ENCODE measurements at regions of chr15 and their contacts with region 1.

Region 1: DNA sequence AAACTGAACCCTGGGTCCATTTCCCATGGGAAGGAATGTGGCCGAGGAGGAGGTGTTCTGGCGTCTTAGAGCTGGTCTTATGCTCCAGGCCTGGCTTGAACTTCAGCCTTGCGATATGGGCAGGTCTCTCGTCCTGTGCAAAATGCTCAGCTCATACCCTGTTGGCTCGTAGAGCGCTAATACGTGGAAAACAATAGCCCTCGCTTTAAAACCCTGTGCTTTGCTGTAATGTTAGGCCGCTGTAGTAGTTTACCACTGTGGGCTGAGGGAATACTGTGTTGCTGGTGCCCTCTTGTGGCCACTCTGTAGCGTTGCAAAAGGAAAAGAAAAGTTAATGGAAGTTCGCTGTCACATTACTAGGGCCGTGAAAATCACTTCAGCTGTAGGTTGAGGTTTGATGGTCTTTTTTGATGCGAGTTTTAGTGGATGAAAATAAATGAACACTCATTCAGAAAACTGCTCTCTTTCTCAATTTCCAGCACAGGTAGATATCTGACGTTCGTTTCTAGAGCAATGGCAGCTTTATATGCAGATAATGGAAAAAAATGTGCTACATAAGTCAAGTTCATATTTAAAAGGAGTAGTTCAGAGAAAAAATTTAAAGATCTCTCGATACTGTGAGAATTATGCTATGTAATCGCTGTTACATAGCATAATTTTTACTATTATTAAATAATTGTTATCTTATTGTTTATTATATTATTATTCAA is 92.9 kb downstream of the MCTP2 start:
- DNase-seq: peak; percentile 66
- ATAC-seq: peak; percentile 92

Region 2: DNA sequence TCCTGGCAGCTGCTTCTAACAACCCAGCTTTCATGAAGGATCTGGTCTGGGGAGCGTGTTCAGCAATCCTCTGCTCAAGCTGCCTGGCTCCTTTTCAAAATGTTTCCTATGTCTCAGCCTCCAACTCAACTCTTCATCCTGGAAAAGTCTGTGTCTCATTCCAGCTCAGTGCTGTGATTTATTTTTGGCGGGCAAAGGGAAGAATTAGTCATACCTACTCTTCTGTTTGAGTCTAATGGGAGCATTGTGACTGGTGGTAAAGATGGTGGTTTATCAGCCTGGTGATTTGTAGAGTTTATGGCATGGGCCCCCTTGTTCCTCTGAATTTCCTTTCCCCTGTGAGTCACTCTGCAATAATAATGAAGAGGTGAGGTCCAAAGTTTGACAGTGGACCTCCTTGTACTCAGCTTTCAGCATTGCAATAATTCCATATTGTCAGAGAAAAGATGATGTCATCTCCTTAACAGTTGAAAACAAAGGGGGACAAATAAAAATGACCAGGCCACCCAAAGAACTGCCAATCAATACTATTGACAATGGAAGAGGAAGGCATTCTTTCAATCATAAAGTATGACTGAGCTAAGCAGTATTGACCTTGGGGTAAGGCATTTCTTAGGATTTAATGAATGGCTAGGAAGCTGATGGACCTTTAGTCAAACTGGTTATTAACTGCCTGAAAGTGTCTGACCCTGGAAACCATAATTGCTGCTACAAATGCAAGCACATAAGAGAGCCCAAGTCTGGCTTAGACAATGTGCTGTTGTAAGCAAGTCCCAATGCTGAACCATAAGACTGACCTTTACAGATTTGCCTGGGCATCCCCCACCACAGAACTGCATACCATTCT is 297.6 kb before region 1 on chr15:
- intact Hi-C with region 1: no loop called
- DNase-seq: no peak
- ATAC-seq: no peak

Region 3: DNA sequence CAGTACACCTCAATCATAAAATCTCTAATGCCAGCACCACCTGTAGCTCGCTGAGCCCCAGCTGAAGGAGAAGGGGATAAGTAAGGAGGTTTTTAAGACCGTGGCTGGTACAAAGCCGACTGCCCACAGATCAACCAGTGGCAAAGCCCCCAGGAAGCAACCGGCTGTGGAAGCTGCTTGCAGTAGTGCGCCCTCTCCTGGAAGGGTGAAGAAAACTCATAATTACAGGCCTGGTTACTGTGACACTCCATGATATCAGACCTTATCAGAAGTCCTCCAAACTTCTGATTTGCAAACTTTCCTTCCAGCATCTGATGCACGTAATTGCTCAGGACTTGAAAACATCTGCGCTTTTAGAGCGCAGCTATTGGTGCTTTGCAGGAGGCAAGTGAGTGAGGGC is 156.0 kb before region 1 on chr15:
- intact Hi-C with region 1: loop called (anchors 5 kb)
- DNase-seq: no peak
- ATAC-seq: no peak

Region 4: GRCh38 chr15:94412979-94413746 is 88.9 kb after region 1 on chr15:
- intact Hi-C with region 1: no loop called
- DNase-seq: no peak
- ATAC-seq: no peak

Region 5: DNA sequence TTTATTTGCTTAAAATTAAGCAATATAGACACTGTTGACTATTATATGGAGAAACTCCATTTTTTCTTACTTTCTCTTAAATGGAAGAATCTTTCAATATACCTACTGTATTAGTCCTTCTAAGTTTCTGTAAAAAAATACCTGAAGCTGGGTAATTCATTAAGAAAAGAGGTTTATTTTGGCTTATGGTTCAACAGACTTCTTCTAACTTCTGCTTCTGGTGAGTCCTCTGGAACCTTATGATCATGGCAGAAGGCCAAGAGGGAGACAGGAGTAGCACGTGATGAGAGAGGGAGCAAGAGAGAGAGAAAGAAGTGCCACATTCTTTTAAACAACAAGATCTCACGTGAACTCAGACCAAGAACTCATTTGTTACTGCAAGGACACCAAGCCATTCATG is 480.3 kb after region 1 on chr15:
- intact Hi-C with region 1: no loop called
- DNase-seq: no peak
- ATAC-seq: no peak

Measured in sciatic nerve (tissue), 2 donors.